A673 (cell line): ENCODE measurements at regions of chr2 and their contacts with region 1.

Region 1: DNA sequence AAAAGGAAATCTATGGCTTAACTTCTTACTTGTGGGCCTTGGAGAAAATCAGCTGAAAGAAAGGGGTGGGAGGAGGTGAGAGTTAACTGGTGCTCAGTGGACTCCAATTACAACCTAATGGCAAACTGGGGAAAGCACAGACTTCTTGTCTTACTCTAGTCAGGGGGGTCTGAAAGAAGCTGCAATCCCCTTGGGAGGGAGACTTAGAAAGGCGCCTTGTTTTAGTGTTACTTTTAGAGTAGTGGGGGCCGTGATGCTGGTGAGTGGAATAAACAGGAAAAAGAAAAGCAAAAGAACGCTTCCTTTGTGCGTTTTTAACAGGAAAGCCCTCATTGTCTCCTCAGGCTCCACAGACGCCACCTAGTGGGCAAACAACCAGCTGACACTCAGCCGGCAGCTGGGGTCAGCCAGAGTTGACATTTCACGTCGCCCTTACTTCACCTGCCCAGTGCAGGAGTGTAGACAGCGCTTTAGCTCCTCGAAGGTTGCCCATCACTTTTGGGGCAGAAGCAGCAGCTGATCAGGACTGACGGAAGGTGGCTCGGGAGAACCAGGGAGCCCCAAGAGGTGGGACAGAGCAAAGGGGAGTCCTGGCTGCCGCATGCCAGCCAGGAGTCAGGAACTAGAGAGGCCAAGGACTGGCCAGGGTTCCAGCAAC is 55.9 kb upstream of the GORASP2 start:
- DNase-seq: peak; percentile 78
- H3K4me3 ChIP-seq: peak overlapping the region; percentile 26
- H3K27ac ChIP-seq: no peak overlapping the region
- H3K4me1 ChIP-seq: no peaks in the 10 kb centered on the region
- H3K27me3 ChIP-seq: no peaks in the 10 kb centered on the region
- CTCF ChIP-seq: peak; percentile 98

Region 2: DNA sequence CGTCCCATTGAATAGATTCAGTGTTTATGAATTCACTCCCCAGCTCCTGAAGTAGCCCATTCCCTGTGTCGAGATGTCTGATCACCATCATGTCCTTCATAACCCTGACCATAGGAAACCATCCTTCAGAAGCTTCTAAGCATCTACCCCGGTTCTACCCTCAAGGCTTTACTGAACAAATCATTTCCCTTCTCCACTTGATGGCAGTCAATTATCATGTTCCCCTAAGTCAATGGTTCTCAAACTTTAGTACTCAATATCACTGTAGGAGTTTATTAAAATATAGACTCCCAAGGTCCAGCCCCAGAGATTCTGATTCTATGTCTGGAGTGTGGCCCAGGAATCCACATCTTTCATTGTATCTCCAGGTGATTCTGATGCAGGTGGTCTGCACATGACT is 386.4 kb before region 1 on chr2:
- CTCF ChIA-PET with region 1: no interaction called
- POLR2A ChIA-PET with region 1: no interaction called
- intact Hi-C with region 1: no loop called
- DNase-seq: no peak
- H3K4me3 ChIP-seq: no peak overlapping the region
- H3K27ac ChIP-seq: no peak overlapping the region
- H3K4me1 ChIP-seq: no peaks in the 10 kb centered on the region
- H3K27me3 ChIP-seq: no peaks in the 10 kb centered on the region
- CTCF ChIP-seq: peak; percentile 30; the same call in 1 of the 2 replicates

Region 3: DNA sequence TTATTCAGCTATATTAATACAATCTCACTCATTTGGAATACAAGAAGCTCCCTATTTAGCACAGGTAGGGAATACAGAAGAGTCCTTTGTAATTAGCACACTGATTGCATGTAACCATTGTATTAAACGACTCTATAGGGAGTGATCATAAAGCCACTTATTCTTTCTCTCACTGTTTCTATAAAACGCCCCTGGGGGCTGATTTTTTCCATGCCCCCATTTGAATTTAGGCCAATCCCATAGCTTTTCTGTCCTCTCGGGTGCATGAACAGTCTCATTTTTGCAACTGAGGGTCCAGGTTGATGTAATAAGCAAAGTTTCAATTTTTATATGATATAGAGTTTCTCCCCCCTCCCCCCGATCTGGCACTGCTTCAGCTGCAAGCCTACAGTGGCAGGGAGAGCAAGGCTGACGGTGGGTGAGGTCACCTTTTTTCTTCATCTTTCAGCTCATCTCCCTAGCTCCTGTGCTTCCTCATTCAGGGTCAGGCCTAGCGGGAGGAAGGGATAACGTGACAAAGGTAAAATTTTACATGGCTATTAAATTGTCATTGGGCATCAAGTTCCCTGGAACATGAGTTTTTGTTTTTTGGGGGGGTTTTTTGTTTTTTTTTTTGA is 10.8 kb before region 1 on chr2:
- CTCF ChIA-PET with region 1: interaction called, 11 read pairs
- POLR2A ChIA-PET with region 1: no interaction called
- intact Hi-C with region 1: no loop called
- DNase-seq: no peak
- H3K4me3 ChIP-seq: no peak overlapping the region
- H3K27ac ChIP-seq: no peak overlapping the region
- H3K4me1 ChIP-seq: no peaks in the 10 kb centered on the region
- H3K27me3 ChIP-seq: no peaks in the 10 kb centered on the region
- CTCF ChIP-seq: no peak

Region 4: GRCh38 chr2:171124541-171124940 is 251.4 kb after region 1 on chr2:
- CTCF ChIA-PET with region 1: no interaction called
- POLR2A ChIA-PET with region 1: no interaction called
- intact Hi-C with region 1: no loop called
- DNase-seq: peak; percentile 10
- H3K4me3 ChIP-seq: no peak overlapping the region
- H3K27ac ChIP-seq: no peak overlapping the region
- H3K4me1 ChIP-seq: peaks cover 22% of the 10 kb centered on the region
- H3K27me3 ChIP-seq: no peaks in the 10 kb centered on the region
- CTCF ChIP-seq: no peak